ENCODE measurements at regions of chr7 and their contacts with region 1.

Region 1: GRCh38 chr7:95916573-95917297 is 144.4 kb downstream of the DYNC1I1 start:
- DNase-seq: peak; percentile 82
- H3K4me3 ChIP-seq: peak overlapping the region; percentile 31
- H3K27ac ChIP-seq: peak overlapping the region; percentile 20
- H3K4me1 ChIP-seq: peaks cover 15% of the 10 kb centered on the region
- H3K27me3 ChIP-seq: no peaks in the 10 kb centered on the region
- CTCF ChIP-seq: peak; percentile 97

Region 2: GRCh38 chr7:95859434-95859833 is 57.3 kb before region 1 on chr7:
- CTCF ChIA-PET with region 1: no interaction called
- POLR2A ChIA-PET with region 1: no interaction called
- intact Hi-C with region 1: no loop called
- DNase-seq: no peak
- H3K4me3 ChIP-seq: no peak overlapping the region
- H3K27ac ChIP-seq: no peak overlapping the region
- H3K4me1 ChIP-seq: no peaks in the 10 kb centered on the region
- H3K27me3 ChIP-seq: no peaks in the 10 kb centered on the region
- CTCF ChIP-seq: no peak

Region 3: DNA sequence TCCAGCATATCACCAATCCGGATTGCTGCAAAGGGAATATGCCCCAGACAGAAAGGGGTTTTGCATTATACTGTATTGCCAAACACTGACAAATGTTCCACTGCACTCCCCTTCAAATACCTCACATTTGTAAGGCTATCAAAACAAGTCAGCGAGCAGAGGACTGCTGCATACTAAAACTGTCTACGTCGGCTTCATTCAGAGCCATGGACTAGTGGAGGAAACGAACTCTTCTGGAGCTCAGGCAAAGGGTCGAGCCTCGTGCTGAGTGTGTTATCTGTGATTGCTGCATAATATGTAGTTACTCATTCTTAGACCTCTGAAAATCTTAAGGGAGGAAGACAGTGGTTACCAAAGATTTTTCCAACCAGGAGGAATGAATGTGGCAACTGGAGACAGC is 55.8 kb after region 1 on chr7:
- CTCF ChIA-PET with region 1: no interaction called
- POLR2A ChIA-PET with region 1: no interaction called
- intact Hi-C with region 1: loop called (anchors 10 kb)
- DNase-seq: no peak
- H3K4me3 ChIP-seq: no peak overlapping the region
- H3K27ac ChIP-seq: no peak overlapping the region
- H3K4me1 ChIP-seq: no peaks in the 10 kb centered on the region
- H3K27me3 ChIP-seq: no peaks in the 10 kb centered on the region
- CTCF ChIP-seq: no peak

Region 4: DNA sequence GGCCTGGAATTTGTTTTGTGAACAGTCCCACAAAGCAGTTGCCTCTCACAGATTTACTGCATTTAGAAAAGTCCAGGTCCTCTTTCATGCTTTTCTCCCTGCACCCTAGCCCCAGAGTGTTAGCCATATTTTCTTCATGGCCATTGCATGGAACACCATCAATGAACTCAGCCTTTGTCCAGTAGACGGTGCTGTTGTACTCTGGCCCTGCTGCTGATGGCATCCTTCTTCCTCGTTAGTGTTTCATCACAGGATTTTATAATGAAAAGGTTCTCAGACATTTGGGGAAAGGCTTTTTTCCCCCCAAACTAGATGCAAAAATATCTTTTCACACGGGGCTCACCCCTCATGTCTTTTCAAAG is 498.2 kb after region 1 on chr7:
- CTCF ChIA-PET with region 1: no interaction called
- POLR2A ChIA-PET with region 1: no interaction called
- intact Hi-C with region 1: loop called (anchors 5 kb)
- DNase-seq: peak; percentile 80
- H3K4me3 ChIP-seq: no peak overlapping the region
- H3K27ac ChIP-seq: peak overlapping the region; percentile 44
- H3K4me1 ChIP-seq: peaks cover 29% of the 10 kb centered on the region
- H3K27me3 ChIP-seq: no peaks in the 10 kb centered on the region
- CTCF ChIP-seq: peak; percentile 85

Region 5: GRCh38 chr7:97064967-97065587 is 1148.3 kb after region 1 on chr7:
- CTCF ChIA-PET with region 1: no interaction called
- POLR2A ChIA-PET with region 1: no interaction called
- intact Hi-C with region 1: loop called (anchors 1 kb)
- DNase-seq: peak; percentile 70
- H3K4me3 ChIP-seq: no peak overlapping the region
- H3K27ac ChIP-seq: no peak overlapping the region
- H3K4me1 ChIP-seq: no peaks in the 10 kb centered on the region
- H3K27me3 ChIP-seq: no peaks in the 10 kb centered on the region
- CTCF ChIP-seq: peak; percentile 82

Region 6: DNA sequence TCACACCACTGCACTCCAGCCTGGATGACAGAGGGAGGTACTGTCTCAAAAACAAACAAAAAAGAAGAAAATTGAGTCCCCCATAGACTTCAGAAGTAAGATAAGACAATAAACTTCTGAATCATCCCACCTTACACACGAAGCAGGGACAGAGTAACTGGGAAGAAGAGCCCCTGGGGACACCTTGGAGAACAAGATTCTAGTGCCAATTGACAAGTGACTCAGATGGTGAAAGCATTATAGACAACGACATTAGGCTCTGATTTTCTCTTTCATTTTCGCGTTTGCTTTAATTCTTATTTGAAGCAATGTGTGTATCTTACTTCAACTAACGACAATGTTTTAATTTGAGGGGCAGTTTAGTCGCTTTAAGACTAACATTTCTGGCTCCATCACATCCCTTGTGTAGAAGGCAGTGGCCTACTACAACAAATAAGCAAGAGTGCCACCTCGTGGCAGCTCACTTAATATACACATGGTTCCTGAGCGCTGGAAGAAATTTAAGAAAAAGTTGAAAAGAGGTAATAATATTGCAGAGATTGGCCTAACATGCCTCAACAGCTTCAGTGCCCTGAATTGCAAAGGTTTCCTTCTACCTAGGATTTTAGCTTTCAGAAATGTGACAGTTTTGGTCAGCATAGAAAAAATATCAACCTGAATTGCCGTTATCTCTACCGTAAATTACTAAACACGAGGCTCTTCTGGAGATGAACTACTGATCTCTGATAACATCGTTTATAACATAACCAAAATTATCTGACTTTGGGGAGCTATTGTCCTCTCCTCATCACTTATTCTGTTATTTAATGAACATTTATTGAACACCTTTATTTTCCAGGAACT is 1918.8 kb after region 1 on chr7:
- CTCF ChIA-PET with region 1: no interaction called
- POLR2A ChIA-PET with region 1: no interaction called
- intact Hi-C with region 1: loop called (anchors 2 kb)
- DNase-seq: peak; percentile 74
- H3K4me3 ChIP-seq: no peak overlapping the region
- H3K27ac ChIP-seq: no peak overlapping the region
- H3K4me1 ChIP-seq: no peaks in the 10 kb centered on the region
- H3K27me3 ChIP-seq: peaks cover 18% of the 10 kb centered on the region
- CTCF ChIP-seq: peak; percentile 80